ENCODE measurements at regions of chr1 and their contacts with region 1.

Region 1: GRCh38 chr1:172429331-172430127 is 9.0 kb downstream of the C1orf105 start:
- DNase-seq: peak in 1 of 2 donors; percentile 41
- ATAC-seq: peak in 5 of 8 donors; percentile 37 to 62 (median 42)
- H3K4me3 ChIP-seq: no peak overlapping the region
- H3K27ac ChIP-seq: no peak overlapping the region
- H3K4me1 ChIP-seq: peaks cover 0 to 11% (median 0%) of the 10 kb centered on the region in 9 donors
- H3K27me3 ChIP-seq: no peaks in the 10 kb centered on the region
- CTCF ChIP-seq: peak; percentile 42 to 77 (median 70)

Region 2: GRCh38 chr1:171794085-171794484 is 635.4 kb before region 1 on chr1:
- intact Hi-C with region 1: loop called in 1 of 10 experiments (anchors 10 kb)
- DNase-seq: no peak
- ATAC-seq: no peak
- H3K4me3 ChIP-seq: no peak overlapping the region
- H3K27ac ChIP-seq: no peak overlapping the region
- H3K4me1 ChIP-seq: peaks cover 0 to 12% (median 0%) of the 10 kb centered on the region in 9 donors
- H3K27me3 ChIP-seq: no peaks in the 10 kb centered on the region
- CTCF ChIP-seq: no peak

Region 3: DNA sequence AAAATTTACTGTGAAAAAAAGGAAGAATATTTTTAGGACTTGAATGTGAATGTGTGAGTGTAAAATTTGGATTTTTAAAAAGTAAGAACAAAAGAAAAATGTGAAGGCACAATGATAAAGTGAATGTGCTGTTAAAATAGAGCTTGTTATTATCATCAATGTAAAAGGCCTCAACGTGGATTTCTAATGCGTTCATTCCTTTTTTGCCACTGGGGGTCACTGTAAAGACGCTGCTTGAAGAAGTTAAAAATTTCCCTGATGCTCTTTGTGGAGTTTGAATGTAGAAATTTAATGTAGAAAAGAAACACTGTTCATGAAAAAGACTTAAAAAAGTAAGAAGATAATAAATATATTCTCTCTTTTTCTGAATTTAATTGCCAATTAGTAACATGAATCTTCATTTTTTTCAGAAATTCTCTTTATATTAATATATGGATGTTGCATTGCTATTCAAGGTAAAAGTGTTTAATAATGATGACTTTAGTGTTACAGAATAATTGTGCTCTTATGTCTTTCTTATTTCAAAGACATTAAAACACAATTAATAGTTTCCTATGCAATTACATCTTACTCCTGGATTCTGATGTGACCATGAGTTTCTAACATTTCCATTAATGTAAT is 426.7 kb before region 1 on chr1:
- intact Hi-C with region 1: loop called in 1 of 10 experiments (anchors 2 kb)
- DNase-seq: peak in 1 of 2 donors; percentile 9
- ATAC-seq: no peak
- H3K4me3 ChIP-seq: no peak overlapping the region
- H3K27ac ChIP-seq: no peak overlapping the region
- H3K4me1 ChIP-seq: peaks cover 0 to 10% (median 0%) of the 10 kb centered on the region in 9 donors
- H3K27me3 ChIP-seq: no peaks in the 10 kb centered on the region
- CTCF ChIP-seq: peak; percentile 25 to 81 (median 68)

Region 4: DNA sequence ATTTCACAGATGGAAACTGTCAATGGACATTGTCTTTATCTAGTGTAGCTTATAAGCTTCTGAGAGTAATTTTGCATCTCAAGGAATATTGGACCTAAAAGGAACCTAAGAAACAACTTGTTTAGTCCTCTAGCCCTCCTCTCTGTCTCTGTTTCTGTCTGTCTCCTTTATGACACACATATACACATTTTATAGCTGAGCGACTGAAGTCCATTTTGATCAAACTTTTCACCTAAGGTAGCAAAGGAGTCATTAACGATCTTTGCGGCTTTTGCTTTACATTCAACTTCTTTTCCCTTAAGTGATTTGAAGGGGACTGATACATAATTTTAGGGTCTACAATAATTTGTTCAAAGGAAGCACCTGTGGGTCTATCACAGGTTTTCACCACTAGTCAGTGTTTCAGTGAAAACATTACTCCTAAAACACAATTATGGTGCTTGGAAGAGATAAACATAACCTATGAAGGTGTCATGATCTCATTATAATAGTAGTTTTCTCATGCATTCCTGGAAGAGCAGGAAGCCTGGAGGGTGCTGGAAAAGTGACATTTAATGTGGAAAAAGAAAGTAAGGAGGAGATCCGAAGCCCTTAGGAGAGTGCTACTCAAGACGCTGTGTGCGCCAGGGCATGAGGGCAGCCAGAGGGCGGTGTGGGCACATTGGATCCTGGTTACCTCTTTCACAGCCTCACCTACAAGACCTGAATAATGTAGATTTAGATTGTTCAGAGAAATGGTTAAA is 339.6 kb before region 1 on chr1:
- intact Hi-C with region 1: loop called in 1 of 10 experiments (anchors 10 kb)
- DNase-seq: peak; percentile 28 to 41
- ATAC-seq: peak in 7 of 8 donors; percentile 55 to 84 (median 73)
- H3K4me3 ChIP-seq: no peak overlapping the region
- H3K27ac ChIP-seq: no peak overlapping the region
- H3K4me1 ChIP-seq: no peaks in the 10 kb centered on the region
- H3K27me3 ChIP-seq: no peaks in the 10 kb centered on the region
- CTCF ChIP-seq: peak; percentile 31 to 81 (median 71)

Region 5: GRCh38 chr1:172515927-172516326 is 86.4 kb after region 1 on chr1:
- intact Hi-C with region 1: no loop called
- DNase-seq: no peak
- ATAC-seq: peak in 2 of 8 donors; percentile 38 to 56
- H3K4me3 ChIP-seq: no peak overlapping the region
- H3K27ac ChIP-seq: peak overlapping the region in 1 of 10 donors; percentile 10
- H3K4me1 ChIP-seq: peaks cover 0 to 13% (median 0%) of the 10 kb centered on the region in 9 donors
- H3K27me3 ChIP-seq: no peaks in the 10 kb centered on the region
- CTCF ChIP-seq: no peak